ENCODE measurements at regions of chr11 and their contacts with region 1.

Region 1: DNA sequence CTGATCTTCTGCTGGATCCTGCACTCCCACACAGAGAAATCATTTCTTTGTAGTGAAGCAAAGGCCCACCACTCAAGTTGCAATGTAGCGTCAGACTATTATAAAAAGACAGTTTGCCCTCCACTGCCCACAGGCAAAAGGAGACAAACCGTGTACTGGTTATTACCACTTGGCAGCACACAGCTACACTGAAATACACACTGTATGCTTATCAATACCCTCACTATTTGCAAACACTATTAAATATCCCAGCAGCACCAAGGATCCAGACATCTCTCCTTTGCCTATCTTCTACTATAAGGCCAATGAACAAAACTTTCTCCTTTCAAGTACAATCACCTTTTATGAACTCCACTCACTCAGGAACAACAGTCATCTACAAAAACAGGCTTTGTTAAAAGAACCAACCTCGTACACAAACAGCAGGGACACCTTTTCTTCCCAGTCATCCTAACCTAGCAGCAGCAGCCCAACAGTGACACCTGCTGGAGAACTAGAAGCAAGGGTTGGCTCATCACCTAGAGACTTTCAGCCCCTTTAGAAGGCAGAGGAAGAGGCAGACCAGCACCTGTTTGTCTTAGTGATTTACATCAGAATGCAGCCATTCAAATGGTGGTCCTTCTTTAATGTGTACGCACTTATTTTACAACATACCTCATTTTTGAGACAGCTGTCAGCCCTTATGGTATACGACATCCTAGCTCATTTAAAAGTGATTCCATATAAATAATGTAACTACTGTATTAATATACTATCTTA is 56.1 kb downstream of the AMBRA1 start:
- DNase-seq: peak; percentile 73
- H3K4me3 ChIP-seq: no peak overlapping the region
- H3K27ac ChIP-seq: no peak overlapping the region
- H3K4me1 ChIP-seq: peaks cover 3% of the 10 kb centered on the region
- H3K27me3 ChIP-seq: no peaks in the 10 kb centered on the region
- CTCF ChIP-seq: peak; percentile 76

Region 2: DNA sequence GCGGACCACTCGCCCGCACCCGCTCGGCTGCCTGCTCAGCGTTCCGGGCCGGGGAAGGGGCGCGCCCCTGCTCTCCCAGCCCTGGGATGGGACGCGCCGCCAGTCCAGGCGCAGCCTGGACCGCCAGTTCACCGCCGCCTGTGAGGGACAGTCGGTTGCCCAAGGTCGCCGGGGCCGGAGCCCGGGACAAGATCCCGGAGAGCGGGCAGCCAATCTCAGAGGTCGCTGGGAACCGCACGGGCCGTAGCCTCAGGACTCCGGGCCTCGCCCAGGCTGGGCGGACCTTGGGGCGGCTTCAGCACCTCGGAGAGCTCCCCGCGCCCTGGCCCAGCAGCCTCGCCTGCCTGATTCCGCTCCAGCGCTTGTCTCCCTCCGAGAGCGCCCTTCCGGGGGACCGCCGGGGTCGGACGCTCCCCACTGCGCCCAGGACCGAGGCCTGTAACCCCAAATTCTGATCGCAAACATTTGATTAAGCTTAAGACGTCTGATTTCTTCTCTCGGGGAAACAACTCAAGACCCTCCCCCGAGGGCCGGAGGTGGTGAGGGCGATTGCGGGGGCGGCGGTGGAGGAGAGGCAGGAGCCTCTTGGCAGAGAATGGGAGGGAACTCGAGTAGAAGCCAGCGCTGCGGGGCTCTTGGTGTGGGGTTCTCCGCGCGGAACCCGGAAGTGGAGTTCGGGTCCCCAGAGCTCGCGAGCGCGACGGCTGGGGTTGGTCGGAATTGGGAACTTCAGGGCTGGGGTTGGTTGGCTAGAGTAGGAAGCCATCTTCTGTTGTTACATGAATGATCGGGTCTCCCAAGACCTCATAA is 145.1 kb before region 1 on chr11:
- intact Hi-C with region 1: loop called (anchors 2 kb)
- DNase-seq: peak; percentile 85
- H3K4me3 ChIP-seq: peak overlapping the region; percentile 40
- H3K27ac ChIP-seq: no peak overlapping the region
- H3K4me1 ChIP-seq: peaks cover 16% of the 10 kb centered on the region
- H3K27me3 ChIP-seq: peaks cover 51% of the 10 kb centered on the region
- CTCF ChIP-seq: no peak

Region 3: GRCh38 chr11:46489661-46490560 is 47.8 kb before region 1 on chr11:
- intact Hi-C with region 1: loop called (anchors 5 kb)
- DNase-seq: peak; percentile 40
- H3K4me3 ChIP-seq: no peak overlapping the region
- H3K27ac ChIP-seq: no peak overlapping the region
- H3K4me1 ChIP-seq: peaks cover 17% of the 10 kb centered on the region
- H3K27me3 ChIP-seq: no peaks in the 10 kb centered on the region
- CTCF ChIP-seq: peak; percentile 39

Region 4: GRCh38 chr11:46616998-46617675 is 79.4 kb after region 1 on chr11 and contains the starts of genes ATG13 and HARBI1:
- intact Hi-C with region 1: loop called (anchors 5 kb)
- DNase-seq: peak; percentile 91
- H3K4me3 ChIP-seq: peak within 1 kb of the TSS; percentile 93
- H3K27ac ChIP-seq: peak within 1 kb of the TSS; percentile 94
- H3K4me1 ChIP-seq: peaks cover 10% of the 10 kb centered on the region
- H3K27me3 ChIP-seq: no peaks in the 10 kb centered on the region
- CTCF ChIP-seq: no peak
- total RNA-seq, gene ATG13: 58.3 to 61.3 TPM
- total RNA-seq, gene HARBI1: 4.5 to 5.0 TPM